ENCODE measurements at regions of chr3 and their contacts with region 1.

Region 1: DNA sequence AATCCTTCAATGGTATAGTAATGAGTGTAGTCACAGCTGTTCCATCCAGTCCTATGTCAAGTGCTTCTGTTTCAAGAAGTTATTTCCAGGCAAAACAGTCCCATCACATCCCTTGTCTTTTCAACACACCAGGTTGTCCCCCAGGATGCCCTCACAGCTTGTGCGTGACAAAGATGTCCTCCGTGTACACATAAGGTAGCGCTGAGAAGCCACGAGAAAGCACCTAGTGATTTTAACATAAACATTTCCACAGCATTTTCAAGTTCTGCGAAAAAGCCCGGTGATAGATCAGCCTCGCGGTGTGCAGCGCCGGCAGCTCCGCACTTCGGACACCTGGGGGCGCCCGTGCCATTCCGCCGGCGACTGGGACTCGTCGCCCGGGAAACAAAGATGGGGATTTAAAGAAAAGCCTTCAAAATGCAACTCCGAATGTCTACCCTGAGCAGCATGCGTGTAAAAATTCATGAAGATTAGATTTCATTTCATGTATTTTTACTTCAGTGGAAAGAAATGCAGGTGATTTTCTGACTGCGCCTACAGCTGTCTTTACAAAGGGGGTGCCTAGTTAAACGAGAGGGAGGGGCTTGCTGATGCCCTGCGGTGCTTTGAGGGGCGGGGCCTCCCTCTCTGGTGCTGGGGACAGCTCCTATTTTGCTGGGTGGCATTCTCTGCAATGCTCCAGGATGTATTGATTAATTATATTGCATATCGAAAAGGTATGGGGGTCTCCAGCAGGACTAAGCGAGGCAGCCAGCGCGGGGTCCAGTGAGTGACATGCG is 49.9 kb downstream of the KY start:
- DNase-seq: peak; percentile 71
- H3K4me3 Mint-ChIP-seq: no peak overlapping the region
- H3K27ac Mint-ChIP-seq: no peak overlapping the region
- H3K4me1 Mint-ChIP-seq: peaks cover 7% of the 10 kb centered on the region
- H3K27me3 Mint-ChIP-seq: peaks cover 18% of the 10 kb centered on the region

Region 2: GRCh38 chr3:134590766-134591165 is 10.1 kb before region 1 on chr3:
- CTCF ChIA-PET with region 1: no interaction called
- DNase-seq: no peak
- H3K4me3 Mint-ChIP-seq: no peak overlapping the region
- H3K27ac Mint-ChIP-seq: no peak overlapping the region
- H3K4me1 Mint-ChIP-seq: no peaks in the 10 kb centered on the region
- H3K27me3 Mint-ChIP-seq: peaks cover 8% of the 10 kb centered on the region

Region 3: GRCh38 chr3:134754768-134755559 is 154.1 kb after region 1 on chr3:
- CTCF ChIA-PET with region 1: interaction called, 12 read pairs
- DNase-seq: peak; percentile 60
- H3K4me3 Mint-ChIP-seq: no peak overlapping the region
- H3K27ac Mint-ChIP-seq: no peak overlapping the region
- H3K4me1 Mint-ChIP-seq: no peaks in the 10 kb centered on the region
- H3K27me3 Mint-ChIP-seq: peaks cover 18% of the 10 kb centered on the region

Measured in activated naive CD4-positive, alpha-beta T cell treated with anti-CD3 and anti-CD28 coated beads, Interleukin-2, amount 10 ng/mL, durations not matched to agents 7 days and 5 days (primary cell).